ENCODE measurements at regions of chr1 and their contacts with region 1.

Region 1: GRCh38 chr1:224454397-224455066 is 19.9 kb upstream of the WDR26 start:
- DNase-seq: peak; percentile 95
- H3K4me3 Mint-ChIP-seq: peak overlapping the region; percentile 46
- H3K27ac Mint-ChIP-seq: peak overlapping the region; percentile 68
- H3K4me1 Mint-ChIP-seq: peaks cover 51% of the 10 kb centered on the region
- H3K27me3 Mint-ChIP-seq: no peaks in the 10 kb centered on the region
- CTCF ChIP-seq: no peak

Region 2: DNA sequence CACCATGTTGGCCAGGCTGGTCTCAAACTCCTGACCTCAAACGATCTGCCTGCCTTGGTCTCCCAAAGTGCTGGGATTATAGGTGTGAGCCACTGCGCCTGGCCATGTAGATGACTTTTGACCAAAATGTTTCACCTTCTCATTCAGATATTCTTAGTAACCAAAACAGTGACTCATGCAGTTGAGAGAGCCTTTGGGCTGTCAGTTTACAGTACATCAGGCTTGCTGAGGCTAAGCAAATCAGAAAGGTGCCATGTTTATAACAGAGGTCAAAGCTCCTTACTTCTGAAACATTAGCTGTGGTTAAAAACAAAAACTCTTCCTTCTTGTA is 76.9 kb before region 1 on chr1:
- CTCF ChIA-PET with region 1: interaction called, 41 read pairs
- POLR2A ChIA-PET with region 1: interaction called, 4 read pairs
- intact Hi-C with region 1: no loop called
- DNase-seq: peak; percentile 77
- H3K4me3 Mint-ChIP-seq: no peak overlapping the region
- H3K27ac Mint-ChIP-seq: peak overlapping the region; percentile 44
- H3K4me1 Mint-ChIP-seq: peaks cover 24% of the 10 kb centered on the region
- H3K27me3 Mint-ChIP-seq: no peaks in the 10 kb centered on the region
- CTCF ChIP-seq: no peak

Region 3: GRCh38 chr1:224406216-224406615 is 48.3 kb before region 1 on chr1:
- CTCF ChIA-PET with region 1: interaction called, 42 read pairs
- POLR2A ChIA-PET with region 1: interaction called, 28 read pairs
- intact Hi-C with region 1: loop called (anchors 2 kb)
- DNase-seq: no peak
- H3K4me3 Mint-ChIP-seq: no peak overlapping the region
- H3K27ac Mint-ChIP-seq: peak overlapping the region; percentile 32
- H3K4me1 Mint-ChIP-seq: peaks cover 25% of the 10 kb centered on the region
- H3K27me3 Mint-ChIP-seq: no peaks in the 10 kb centered on the region
- CTCF ChIP-seq: no peak

Region 4: DNA sequence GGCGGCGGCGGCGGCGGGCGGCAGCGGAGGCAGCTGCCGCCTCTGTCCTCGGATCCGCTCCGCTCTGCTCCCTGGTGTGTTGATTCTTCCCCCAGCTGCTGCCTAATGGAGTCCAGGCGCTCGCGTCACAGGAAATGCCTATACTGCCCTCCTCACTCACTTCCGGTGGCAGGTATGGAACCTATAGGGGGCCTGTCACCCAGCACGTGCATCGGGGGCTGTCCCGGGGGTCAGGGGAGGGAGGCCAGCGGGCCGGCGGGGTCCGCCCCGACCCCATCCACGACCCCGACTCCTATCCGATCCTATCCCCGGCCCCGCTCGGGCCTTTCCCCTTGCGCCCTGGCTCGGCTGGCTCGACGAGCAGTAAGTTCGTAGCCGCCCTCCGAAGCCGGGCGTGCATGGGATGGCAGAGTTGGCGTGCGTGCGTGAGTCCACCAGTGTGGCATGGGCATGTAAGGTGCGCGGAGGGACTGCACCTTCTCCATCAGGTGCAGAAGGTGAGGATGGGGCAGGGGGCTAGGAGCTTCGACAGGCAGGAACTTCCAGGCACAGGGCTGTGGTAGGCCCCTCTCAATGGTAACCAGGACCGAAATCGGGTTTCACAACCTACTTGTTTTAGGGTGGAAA is 19.7 kb before region 1 on chr1 and contains the start of gene WDR26:
- CTCF ChIA-PET with region 1: interaction called, 418 read pairs
- POLR2A ChIA-PET with region 1: interaction called, 800 read pairs
- intact Hi-C with region 1: loop called (anchors 1 kb)
- DNase-seq: peak; percentile 96
- H3K4me3 Mint-ChIP-seq: peak within 1 kb of the TSS; percentile 80
- H3K27ac Mint-ChIP-seq: peak within 1 kb of the TSS; percentile 69
- H3K4me1 Mint-ChIP-seq: peaks cover 44% of the 10 kb centered on the region
- H3K27me3 Mint-ChIP-seq: no peaks in the 10 kb centered on the region
- CTCF ChIP-seq: peak; percentile 18
- total RNA-seq, gene WDR26: 149 and 156 TPM in 2 replicates

Region 5: DNA sequence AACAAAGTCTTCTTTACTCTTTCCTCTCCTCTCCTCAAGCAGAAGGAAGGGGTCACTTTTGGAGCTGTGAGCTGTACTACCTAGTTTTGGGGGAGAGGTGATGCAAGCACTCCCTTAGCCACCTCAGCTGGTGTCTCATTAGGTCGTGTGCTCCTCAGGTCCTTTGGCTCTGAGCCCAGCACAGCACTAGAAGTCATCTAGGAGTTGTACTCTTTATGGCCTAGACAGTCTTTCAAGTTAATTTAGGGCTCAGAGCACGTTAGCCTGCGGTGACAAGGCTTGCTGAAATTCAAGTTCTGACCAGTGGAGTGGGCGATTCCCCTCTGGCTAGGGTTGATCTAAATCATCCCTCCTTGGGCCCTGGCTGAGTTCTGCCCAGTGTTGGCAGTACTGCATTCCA is 28.1 kb after region 1 on chr1:
- CTCF ChIA-PET with region 1: interaction called, 30 read pairs
- POLR2A ChIA-PET with region 1: interaction called, 7 read pairs
- intact Hi-C with region 1: no loop called
- DNase-seq: peak; percentile 85
- H3K4me3 Mint-ChIP-seq: no peak overlapping the region
- H3K27ac Mint-ChIP-seq: peak overlapping the region; percentile 61
- H3K4me1 Mint-ChIP-seq: peaks cover 34% of the 10 kb centered on the region
- H3K27me3 Mint-ChIP-seq: no peaks in the 10 kb centered on the region
- CTCF ChIP-seq: no peak

Region 6: GRCh38 chr1:224503161-224504118 is 48.9 kb after region 1 on chr1:
- CTCF ChIA-PET with region 1: interaction called, 99 read pairs
- POLR2A ChIA-PET with region 1: interaction called, 30 read pairs
- intact Hi-C with region 1: no loop called
- DNase-seq: peak; percentile 100
- H3K4me3 Mint-ChIP-seq: peak overlapping the region; percentile 48
- H3K27ac Mint-ChIP-seq: peak overlapping the region; percentile 92
- H3K4me1 Mint-ChIP-seq: peaks cover 72% of the 10 kb centered on the region
- H3K27me3 Mint-ChIP-seq: no peaks in the 10 kb centered on the region
- CTCF ChIP-seq: peak; percentile 10

Measured in MCF 10A (cell line).